ENCODE measurements at regions of chr19 and their contacts with region 1.

Region 1: GRCh38 chr19:55117636-55118391 is at the start of gene PPP1R12C:
- DNase-seq: peak; percentile 88 to 97 (median 91)
- ATAC-seq: peak; percentile 95
- H3K4me3 ChIP-seq: peak within 1 kb of the TSS; percentile 97
- H3K4me3 Mint-ChIP-seq: peak within 1 kb of the TSS; percentile 96 to 100 (median 98)
- H3K27ac ChIP-seq: peak within 1 kb of the TSS; percentile 74
- H3K27ac Mint-ChIP-seq: peak within 1 kb of the TSS; percentile 91 to 96 (median 95)
- H3K4me1 ChIP-seq: peaks cover 12 to 19% of the 10 kb centered on the region in 2 donors
- H3K4me1 Mint-ChIP-seq: peaks cover 14 to 47% (median 36%) of the 10 kb centered on the region in 7 donors
- H3K27me3 ChIP-seq: no peaks in the 10 kb centered on the region
- H3K27me3 Mint-ChIP-seq: peaks cover 0 to 13% (median under 1%) of the 10 kb centered on the region in 5 donors
- total RNA-seq, gene PPP1R12C: 107 to 180 (median 144) TPM

Region 2: DNA sequence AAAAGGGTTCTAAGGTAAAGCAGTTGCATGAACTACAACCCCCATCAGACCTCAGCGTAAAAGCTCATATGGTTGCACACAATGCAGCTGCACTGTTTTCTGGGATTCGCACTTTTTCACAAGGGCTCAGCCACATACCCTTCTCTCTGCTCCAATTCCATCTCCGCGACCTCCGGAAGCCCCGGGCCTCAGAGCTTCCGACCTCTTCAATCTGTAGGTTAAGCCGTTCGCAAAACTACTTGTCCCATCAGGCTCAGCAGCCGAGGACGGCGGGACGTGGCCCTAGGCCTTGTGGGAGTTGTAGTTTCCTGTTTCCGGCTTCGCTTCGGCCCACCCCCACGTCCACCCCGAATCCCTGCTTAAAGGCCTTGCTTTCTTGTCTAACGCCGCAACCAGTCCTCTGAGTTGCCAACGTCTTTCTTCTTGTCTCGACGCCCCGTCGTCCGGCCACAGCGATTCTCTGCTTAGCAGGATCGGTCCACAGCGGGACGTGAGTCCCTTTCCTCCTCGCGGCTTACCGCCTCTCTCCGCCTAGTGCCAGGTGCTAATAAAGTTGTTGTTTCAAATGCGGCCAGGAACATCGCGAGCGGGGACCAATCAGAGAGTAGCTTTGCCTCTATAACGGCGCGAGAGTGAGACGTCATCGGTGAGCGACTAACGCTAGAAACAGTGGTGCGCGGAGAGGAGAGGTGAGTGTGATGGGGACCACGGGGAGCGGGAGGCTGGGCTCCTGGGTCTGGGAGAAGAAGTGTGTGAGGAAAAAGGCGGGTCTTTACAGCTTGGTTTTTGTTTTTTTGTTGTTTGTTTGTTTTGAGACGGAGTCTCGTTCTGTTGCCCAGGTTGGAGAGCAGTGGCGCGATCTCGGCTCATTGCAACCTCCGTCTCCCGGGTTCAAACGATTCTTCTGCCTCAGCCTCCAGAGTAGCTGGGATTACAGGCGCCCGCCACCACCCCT is 1002.4 kb before region 1 on chr19 and contains the starts of genes PRPF31 and TFPT:
- CTCF ChIA-PET with region 1: no interaction called
- POLR2A ChIA-PET with region 1: no interaction called
- intact Hi-C with region 1: loop called (anchors 1 to 10 kb)
- DNase-seq: peak; percentile 80 to 98 (median 97)
- ATAC-seq: peak; percentile 92
- H3K4me3 ChIP-seq: peak within 1 kb of the TSS; percentile 94
- H3K4me3 Mint-ChIP-seq: peak within 1 kb of the TSS; percentile 86 to 96 (median 94)
- H3K27ac ChIP-seq: peak within 1 kb of the TSS; percentile 88
- H3K27ac Mint-ChIP-seq: peak within 1 kb of the TSS; percentile 88 to 97 (median 94)
- H3K4me1 ChIP-seq: peaks cover 11 to 20% of the 10 kb centered on the region in 2 donors
- H3K4me1 Mint-ChIP-seq: peaks cover 23 to 48% (median 42%) of the 10 kb centered on the region in 7 donors
- H3K27me3 ChIP-seq: no peaks in the 10 kb centered on the region
- H3K27me3 Mint-ChIP-seq: peaks cover 0 to 2% (median 0%) of the 10 kb centered on the region in 5 donors
- total RNA-seq, gene PRPF31: 51.8 to 82.1 (median 71.0) TPM
- total RNA-seq, gene TFPT: 13.4 to 46.5 (median 14.6) TPM

Region 3: DNA sequence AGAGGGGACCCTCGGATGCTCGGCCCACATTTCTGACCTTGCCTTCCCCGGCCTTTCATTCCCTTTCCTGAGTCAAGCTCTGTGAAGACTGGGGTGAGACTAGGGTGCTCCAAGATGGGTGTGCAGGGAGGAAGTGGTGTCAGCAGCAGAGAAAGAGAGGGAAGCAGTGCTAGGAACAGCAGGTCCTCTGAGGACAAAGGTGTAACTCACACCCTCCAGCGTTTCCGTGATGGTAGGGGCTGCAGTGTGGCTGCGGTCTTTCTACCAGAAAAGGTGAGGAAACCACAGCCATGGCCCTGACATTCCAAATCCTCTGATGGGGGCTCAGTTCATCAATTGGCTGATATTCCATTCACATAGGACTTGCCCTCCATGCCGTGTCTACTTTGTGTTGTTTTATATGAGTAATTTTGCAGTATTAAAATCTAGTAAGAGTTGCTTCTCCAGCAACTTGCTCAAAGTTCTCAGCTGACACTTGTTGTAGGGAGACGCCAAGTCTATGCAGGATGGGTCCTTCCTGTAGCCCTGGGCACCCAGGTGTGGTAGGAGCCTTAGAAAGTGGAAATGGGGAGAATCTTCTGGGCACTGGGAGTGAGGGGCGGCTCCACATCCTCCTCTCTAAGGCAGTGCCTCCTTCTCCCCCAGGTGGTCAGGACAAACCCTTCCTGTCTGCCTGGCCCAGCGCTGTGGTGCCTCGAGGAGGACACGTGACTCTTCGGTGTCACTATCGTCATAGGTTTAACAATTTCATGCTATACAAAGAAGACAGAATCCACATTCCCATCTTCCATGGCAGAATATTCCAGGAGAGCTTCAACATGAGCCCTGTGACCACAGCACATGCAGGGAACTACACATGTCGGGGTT is 299.9 kb before region 1 on chr19:
- CTCF ChIA-PET with region 1: no interaction called
- POLR2A ChIA-PET with region 1: no interaction called
- intact Hi-C with region 1: no loop called
- DNase-seq: no peak
- ATAC-seq: no peak
- H3K4me3 ChIP-seq: no peak overlapping the region
- H3K4me3 Mint-ChIP-seq: no peak overlapping the region
- H3K27ac ChIP-seq: no peak overlapping the region
- H3K27ac Mint-ChIP-seq: no peak overlapping the region
- H3K4me1 ChIP-seq: no peaks in the 10 kb centered on the region
- H3K4me1 Mint-ChIP-seq: peaks cover 0 to 5% (median 0%) of the 10 kb centered on the region in 7 donors
- H3K27me3 ChIP-seq: no peaks in the 10 kb centered on the region
- H3K27me3 Mint-ChIP-seq: peaks cover 0 to 48% (median 26%) of the 10 kb centered on the region in 5 donors

Region 4: GRCh38 chr19:55027472-55028337 is 90.1 kb before region 1 on chr19:
- CTCF ChIA-PET with region 1: no interaction called
- POLR2A ChIA-PET with region 1: no interaction called
- intact Hi-C with region 1: no loop called
- DNase-seq: no peak
- ATAC-seq: peak; percentile 57
- H3K4me3 ChIP-seq: no peak overlapping the region
- H3K4me3 Mint-ChIP-seq: no peak overlapping the region
- H3K27ac ChIP-seq: peak overlapping the region; percentile 17
- H3K27ac Mint-ChIP-seq: peak overlapping the region in 5 of 9 donors; percentile 8 to 58 (median 38)
- H3K4me1 ChIP-seq: no peaks in the 10 kb centered on the region
- H3K4me1 Mint-ChIP-seq: peaks cover 0 to 25% (median 10%) of the 10 kb centered on the region in 7 donors
- H3K27me3 ChIP-seq: no peaks in the 10 kb centered on the region
- H3K27me3 Mint-ChIP-seq: no peaks in the 10 kb centered on the region

Region 5: DNA sequence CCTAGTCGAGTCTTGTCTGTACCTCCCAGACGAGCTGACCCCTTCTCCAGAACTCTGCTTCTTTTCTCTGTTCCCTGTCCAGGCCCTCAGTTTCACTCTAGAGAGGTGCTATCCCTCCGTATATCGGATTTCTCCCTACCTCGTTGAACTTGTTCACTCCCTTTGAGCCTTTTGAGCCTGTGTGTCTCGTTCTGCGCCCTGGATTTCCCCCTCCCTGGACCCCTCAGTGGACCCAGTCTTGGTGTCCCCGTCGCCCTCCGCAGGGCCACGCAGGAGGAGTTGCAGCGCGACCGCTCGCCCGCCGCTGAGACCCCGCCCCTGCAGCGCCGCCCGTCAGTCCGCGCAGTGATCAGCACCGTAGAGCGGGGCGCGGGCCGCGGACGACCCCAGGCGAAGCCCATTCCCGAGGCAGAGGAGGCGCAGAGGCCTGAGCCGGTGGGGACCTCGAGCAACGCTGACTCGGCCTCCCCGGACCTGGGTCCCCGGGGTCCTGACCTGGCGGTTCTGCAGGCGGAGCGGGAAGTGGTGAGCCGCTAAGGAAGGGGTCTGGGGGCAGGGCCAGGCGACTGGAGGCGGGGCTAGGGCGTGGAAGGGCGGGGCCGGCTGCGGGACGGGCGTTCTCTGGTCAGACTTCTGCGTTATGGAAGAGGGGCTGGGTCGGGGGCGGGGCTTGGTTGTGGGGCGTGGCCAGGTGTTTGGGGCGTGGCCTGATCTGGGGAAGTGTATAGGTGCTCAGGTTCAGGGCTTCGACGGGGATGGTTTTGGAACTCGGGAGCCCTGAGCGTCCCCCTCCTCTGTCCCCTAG is 36.6 kb before region 1 on chr19:
- CTCF ChIA-PET with region 1: no interaction called
- POLR2A ChIA-PET with region 1: no interaction called
- intact Hi-C with region 1: loop called (anchors 1 to 2 kb)
- DNase-seq: peak; percentile 70 to 96 (median 79)
- ATAC-seq: peak; percentile 93
- H3K4me3 ChIP-seq: peak overlapping the region; percentile 53
- H3K4me3 Mint-ChIP-seq: peak overlapping the region; percentile 78 to 92 (median 86)
- H3K27ac ChIP-seq: peak overlapping the region; percentile 2
- H3K27ac Mint-ChIP-seq: peak overlapping the region in 6 of 9 donors; percentile 56 to 96 (median 66)
- H3K4me1 ChIP-seq: peaks cover 10 to 15% of the 10 kb centered on the region in 2 donors
- H3K4me1 Mint-ChIP-seq: peaks cover 12 to 30% (median 20%) of the 10 kb centered on the region in 7 donors
- H3K27me3 ChIP-seq: peaks cover 0 to 12% of the 10 kb centered on the region in 2 donors
- H3K27me3 Mint-ChIP-seq: peaks cover 38 to 47% (median 46%) of the 10 kb centered on the region in 5 donors

Region 6: GRCh38 chr19:55279770-55280643 is 162.2 kb after region 1 on chr19 and contains the start of gene HSPBP1:
- CTCF ChIA-PET with region 1: no interaction called
- POLR2A ChIA-PET with region 1: interaction called, 3 read pairs
- intact Hi-C with region 1: loop called in 1 of 2 experiments (anchors 1 kb)
- DNase-seq: peak; percentile 88 to 96 (median 96)
- ATAC-seq: peak; percentile 92
- H3K4me3 ChIP-seq: peak within 1 kb of the TSS; percentile 91
- H3K4me3 Mint-ChIP-seq: peak within 1 kb of the TSS; percentile 92 to 100 (median 98)
- H3K27ac ChIP-seq: peak within 1 kb of the TSS; percentile 89
- H3K27ac Mint-ChIP-seq: peak within 1 kb of the TSS; percentile 91 to 100 (median 98)
- H3K4me1 ChIP-seq: peaks cover 6 to 32% of the 10 kb centered on the region in 2 donors
- H3K4me1 Mint-ChIP-seq: peaks cover 12 to 52% (median 39%) of the 10 kb centered on the region in 7 donors
- H3K27me3 ChIP-seq: no peaks in the 10 kb centered on the region
- H3K27me3 Mint-ChIP-seq: peaks cover 0 to 9% (median 0%) of the 10 kb centered on the region in 5 donors
- total RNA-seq, gene HSPBP1: 15.0 to 30.0 (median 16.0) TPM

Region 7: DNA sequence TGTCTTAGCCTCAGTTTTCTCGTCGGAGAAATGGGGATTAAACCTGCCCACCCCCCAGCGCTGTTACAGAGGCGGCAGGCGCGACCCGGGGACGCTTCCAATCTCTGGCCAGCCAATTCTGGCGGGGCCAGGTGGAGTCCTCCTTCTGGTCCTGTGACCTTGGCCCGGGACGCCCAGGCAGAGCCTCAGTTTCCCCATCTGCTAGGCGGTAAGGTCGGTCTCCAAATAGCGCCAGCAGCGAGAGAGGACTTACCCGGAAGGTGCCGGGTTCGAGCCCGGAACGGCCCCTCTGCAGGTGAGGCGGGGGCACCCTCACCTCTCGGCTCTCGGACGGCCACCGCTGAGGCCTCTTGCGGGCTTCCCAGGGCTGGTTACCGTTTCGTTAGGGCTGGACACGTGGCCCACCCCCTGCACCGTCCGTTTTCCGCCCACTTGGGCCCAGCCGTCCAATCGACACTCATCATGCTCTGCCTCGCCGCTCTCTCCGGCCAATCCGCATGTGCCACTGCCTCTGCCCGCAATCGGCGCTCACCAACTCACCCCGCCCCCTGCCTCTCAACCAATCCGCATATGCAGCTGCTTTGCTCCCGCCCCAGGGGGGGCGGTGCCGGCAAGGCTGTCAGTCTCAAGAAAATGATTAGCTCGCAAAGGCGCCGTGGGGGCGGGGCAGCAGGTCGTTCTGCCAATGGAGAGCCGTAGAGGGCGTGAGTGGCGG is 343.6 kb after region 1 on chr19 and contains the start of gene ISOC2:
- CTCF ChIA-PET with region 1: no interaction called
- POLR2A ChIA-PET with region 1: no interaction called
- intact Hi-C with region 1: loop called in 1 of 2 experiments (anchors 1 kb)
- DNase-seq: peak; percentile 99 to 100 (median 100)
- ATAC-seq: peak; percentile 98
- H3K4me3 ChIP-seq: peak within 1 kb of the TSS; percentile 91
- H3K4me3 Mint-ChIP-seq: peak within 1 kb of the TSS; percentile 86 to 99 (median 92)
- H3K27ac ChIP-seq: peak within 1 kb of the TSS; percentile 79
- H3K27ac Mint-ChIP-seq: peak within 1 kb of the TSS; percentile 68 to 94 (median 90)
- H3K4me1 ChIP-seq: peaks cover 4 to 12% of the 10 kb centered on the region in 2 donors
- H3K4me1 Mint-ChIP-seq: peaks cover 14 to 33% (median 20%) of the 10 kb centered on the region in 7 donors
- H3K27me3 ChIP-seq: no peaks in the 10 kb centered on the region
- H3K27me3 Mint-ChIP-seq: peaks cover 0 to 2% (median 0%) of the 10 kb centered on the region in 5 donors
- total RNA-seq, gene ISOC2: 5.1 to 20.1 (median 11.3) TPM

Region 8: DNA sequence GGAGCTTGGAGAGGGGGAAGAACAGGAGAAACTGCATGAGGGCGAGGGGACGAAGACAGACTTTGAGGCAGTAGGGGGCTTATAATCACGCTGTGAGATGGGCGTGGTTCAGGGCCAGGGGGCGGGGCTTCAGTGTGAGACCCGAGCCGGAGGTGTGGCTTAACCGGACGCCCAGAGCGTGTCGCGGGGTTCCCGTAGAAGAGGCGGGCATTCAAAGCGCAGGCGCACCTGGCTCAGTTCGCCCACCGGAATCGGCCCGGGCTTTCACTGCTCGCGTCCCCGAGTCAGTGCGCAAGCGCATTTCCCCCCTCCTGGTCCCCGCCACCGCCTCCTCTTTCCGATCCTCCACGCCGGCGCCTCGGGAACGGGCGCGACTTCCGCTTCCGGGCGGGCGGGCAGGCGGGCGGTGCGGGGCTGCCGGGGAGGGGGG is 487.4 kb after region 1 on chr19:
- CTCF ChIA-PET with region 1: no interaction called
- POLR2A ChIA-PET with region 1: no interaction called
- intact Hi-C with region 1: loop called (anchors 1 to 2 kb)
- DNase-seq: peak; percentile 90 to 99 (median 97)
- ATAC-seq: peak; percentile 87
- H3K4me3 ChIP-seq: peak overlapping the region; percentile 51
- H3K4me3 Mint-ChIP-seq: peak overlapping the region; percentile 78 to 98 (median 90)
- H3K27ac ChIP-seq: peak overlapping the region; percentile 90
- H3K27ac Mint-ChIP-seq: peak overlapping the region; percentile 77 to 96 (median 91)
- H3K4me1 ChIP-seq: peaks cover 7 to 18% of the 10 kb centered on the region in 2 donors
- H3K4me1 Mint-ChIP-seq: peaks cover 37 to 70% (median 64%) of the 10 kb centered on the region in 7 donors
- H3K27me3 ChIP-seq: no peaks in the 10 kb centered on the region
- H3K27me3 Mint-ChIP-seq: peaks cover 0 to 3% (median 0%) of the 10 kb centered on the region in 5 donors

Region 9: GRCh38 chr19:56121180-56122167 is 1003.7 kb after region 1 on chr19 and contains the start of gene ZNF787:
- CTCF ChIA-PET with region 1: no interaction called
- POLR2A ChIA-PET with region 1: no interaction called
- intact Hi-C with region 1: loop called in 1 of 2 experiments (anchors 5 kb)
- DNase-seq: peak; percentile 94 to 98 (median 98)
- ATAC-seq: peak; percentile 88
- H3K4me3 ChIP-seq: peak within 1 kb of the TSS; percentile 79
- H3K4me3 Mint-ChIP-seq: peak within 1 kb of the TSS; percentile 85 to 93 (median 88)
- H3K27ac ChIP-seq: peak within 1 kb of the TSS; percentile 97
- H3K27ac Mint-ChIP-seq: peak within 1 kb of the TSS; percentile 87 to 98 (median 95)
- H3K4me1 ChIP-seq: peaks cover 8 to 34% of the 10 kb centered on the region in 2 donors
- H3K4me1 Mint-ChIP-seq: peaks cover 17 to 72% (median 58%) of the 10 kb centered on the region in 7 donors
- H3K27me3 ChIP-seq: no peaks in the 10 kb centered on the region
- H3K27me3 Mint-ChIP-seq: no peaks in the 10 kb centered on the region
- total RNA-seq, gene ZNF787: 19.7 to 41.2 (median 33.0) TPM